ENCODE measurements at regions of chr22 and their contacts with region 1.

Region 1: DNA sequence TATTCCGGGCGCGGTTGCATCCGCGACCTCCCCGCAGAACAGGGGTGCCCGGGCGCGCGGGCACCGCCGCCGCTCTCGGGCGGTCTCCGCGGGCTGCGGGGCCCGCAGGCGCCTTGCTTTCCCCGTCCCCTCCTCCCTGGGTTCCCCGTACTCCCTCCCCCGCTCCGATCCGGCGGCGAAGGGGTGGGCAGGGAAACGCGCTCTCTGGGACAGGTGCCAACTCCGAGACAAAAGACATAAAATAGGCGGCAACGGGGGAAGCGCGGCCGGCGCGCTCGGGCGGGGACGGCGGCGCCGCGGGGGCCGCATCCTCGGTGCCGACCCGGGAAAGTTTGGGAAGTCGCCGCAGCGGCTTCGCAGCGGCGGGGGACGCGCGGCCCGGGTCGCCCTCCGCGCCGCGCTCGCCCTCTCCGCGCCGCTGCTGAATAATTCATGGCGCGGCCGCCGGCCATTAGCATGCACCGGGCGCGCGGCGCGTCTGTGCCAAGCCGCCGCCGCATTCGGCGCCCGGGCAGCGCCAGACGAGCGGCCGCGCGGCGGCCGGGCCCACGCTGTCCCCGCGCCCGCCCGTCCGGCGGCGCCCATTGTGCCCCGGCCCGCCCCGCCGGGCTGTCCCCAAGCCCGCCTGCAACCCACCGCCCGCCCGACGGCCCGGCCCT is 78.7 kb upstream of the PPARA start:
- DNase-seq: peak in 4 of 5 donors; percentile 96 to 99 (median 97)
- H3K4me3 ChIP-seq: peak overlapping the region; percentile 78
- H3K27ac ChIP-seq: peak overlapping the region; percentile 94
- H3K4me1 ChIP-seq: peaks cover 3% of the 10 kb centered on the region
- H3K27me3 ChIP-seq: no peaks in the 10 kb centered on the region
- CTCF ChIP-seq: no peak
- EP300 ChIP-seq: no peak
- POLR2A ChIP-seq: peak; percentile 48

Region 2: DNA sequence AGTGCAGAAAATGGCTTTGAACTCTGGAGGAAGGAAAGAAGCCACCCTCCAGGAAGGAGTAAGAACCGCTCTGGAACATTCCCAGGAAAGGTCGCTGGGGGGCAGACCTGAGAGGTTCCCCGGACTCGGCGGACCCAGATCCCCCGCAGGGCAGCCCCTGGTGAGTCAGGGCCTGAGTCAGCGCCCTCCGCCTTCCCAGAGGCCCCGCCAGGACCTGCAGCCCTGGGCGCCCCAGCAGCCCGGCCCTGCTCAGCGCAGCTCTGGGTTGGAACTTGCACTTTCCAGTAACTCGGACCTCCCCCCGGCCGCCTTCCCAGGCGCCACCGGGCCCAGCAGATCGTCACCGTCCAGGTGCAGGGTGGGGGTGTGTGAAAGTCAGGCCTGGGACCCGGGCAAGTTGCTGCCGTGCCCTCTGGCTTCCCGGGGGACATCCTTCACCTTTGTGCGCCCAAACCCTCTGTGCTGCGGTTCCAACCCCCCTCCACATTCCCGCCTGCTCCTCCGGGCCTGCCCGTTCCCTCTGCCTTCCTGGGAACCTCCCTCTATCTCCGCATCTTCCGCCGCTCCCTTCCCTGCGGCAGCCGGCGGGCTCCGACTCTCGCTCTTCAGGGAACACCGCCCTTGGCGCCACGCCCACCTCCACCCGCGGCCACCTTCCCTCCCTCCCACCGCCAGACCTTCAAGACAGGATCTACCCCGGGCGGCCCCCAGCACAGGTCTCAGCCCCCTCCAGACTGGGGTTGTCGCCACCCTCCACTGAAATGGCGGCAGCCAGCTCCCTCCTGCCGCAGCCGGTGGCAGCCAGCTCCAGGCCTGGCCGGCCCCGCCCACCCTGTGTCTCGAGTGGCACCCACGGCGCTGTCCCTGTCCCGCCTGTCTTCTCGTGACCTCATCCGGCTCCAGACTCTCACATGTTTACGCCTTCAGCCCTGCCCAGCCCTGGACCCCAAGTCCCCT is 57.8 kb before region 1 on chr22:
- intact Hi-C with region 1: loop called in 3 of 4 experiments (anchors 2 to 10 kb)
- DNase-seq: peak; percentile 97 to 98 (median 98)
- H3K4me3 ChIP-seq: peak overlapping the region; percentile 66
- H3K27ac ChIP-seq: peak overlapping the region; percentile 94 to 97
- H3K4me1 ChIP-seq: peaks cover 7% of the 10 kb centered on the region
- H3K27me3 ChIP-seq: no peaks in the 10 kb centered on the region
- CTCF ChIP-seq: peak; percentile 72 to 79 (median 74)
- EP300 ChIP-seq: no peak
- POLR2A ChIP-seq: peak; percentile 74

Measured in ovary (tissue), 10 donors.